ENCODE measurements at regions of chr4 and their contacts with region 1.

Region 1: GRCh38 chr4:63563288-63564014 is 845.8 kb downstream of the TECRL start:
- DNase-seq: no peak
- ATAC-seq: peak; percentile 90
- H3K4me3 ChIP-seq: no peak overlapping the region
- H3K27ac ChIP-seq: no peak overlapping the region
- H3K4me1 ChIP-seq: no peaks in the 10 kb centered on the region
- H3K27me3 ChIP-seq: no peaks in the 10 kb centered on the region
- CTCF ChIP-seq: peak; percentile 16 to 54 (median 38); a peak in 3 of 6 replicates
- EP300 ChIP-seq: no peak
- POLR2A ChIP-seq: no peak
- RAD21 ChIP-seq: peak; percentile 84

Region 2: DNA sequence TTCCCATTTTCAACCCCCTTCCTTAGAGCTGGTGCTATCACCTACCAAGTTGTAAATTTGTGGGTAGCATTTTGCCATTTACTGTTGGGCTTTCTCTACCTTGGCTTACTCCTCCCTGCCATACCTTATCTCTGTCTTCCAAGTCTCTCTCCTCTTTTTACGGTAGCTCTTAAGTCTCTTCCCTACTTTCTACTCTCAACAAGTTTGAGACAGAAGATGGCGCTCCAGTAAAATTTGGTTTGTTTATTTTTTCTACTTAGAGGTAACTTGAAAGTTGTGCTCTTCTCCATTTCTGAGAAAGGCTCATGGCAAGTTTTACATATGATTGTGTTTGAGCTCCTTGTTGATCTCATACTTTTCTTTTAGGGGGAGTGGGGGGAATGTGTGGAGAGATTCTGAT is 662.4 kb before region 1 on chr4:
- CTCF ChIA-PET with region 1: interaction called, 17 read pairs
- POLR2A ChIA-PET with region 1: no interaction called
- RAD21 ChIA-PET with region 1: interaction called, 11 read pairs
- SMC1A ChIA-PET with region 1: interaction called, 5 read pairs
- in situ Hi-C with region 1: no loop called
- intact Hi-C with region 1: no loop called
- DNase-seq: no peak
- ATAC-seq: no peak
- H3K4me3 ChIP-seq: no peak overlapping the region
- H3K27ac ChIP-seq: no peak overlapping the region
- H3K4me1 ChIP-seq: no peaks in the 10 kb centered on the region
- H3K27me3 ChIP-seq: no peaks in the 10 kb centered on the region
- CTCF ChIP-seq: no peak
- EP300 ChIP-seq: no peak
- POLR2A ChIP-seq: no peak
- RAD21 ChIP-seq: no peak

Region 3: DNA sequence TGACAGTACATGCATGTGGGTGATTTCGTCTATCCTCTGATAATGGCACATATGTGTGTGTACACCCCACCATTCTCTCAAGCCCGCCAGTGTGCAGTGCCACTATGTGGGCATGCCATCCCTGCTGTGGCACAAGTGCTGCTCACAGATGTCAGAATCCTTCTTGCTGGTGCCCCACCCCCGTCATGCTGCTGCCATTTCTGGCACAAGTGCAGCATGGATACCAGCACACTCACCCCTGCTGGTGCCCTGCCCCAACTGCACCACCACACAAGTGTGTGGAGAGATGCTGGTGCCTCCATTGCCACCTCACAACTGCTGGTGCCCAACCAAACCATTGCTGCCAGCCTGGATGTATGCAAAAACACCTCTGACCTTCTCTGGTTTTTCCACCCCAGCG is 288.0 kb before region 1 on chr4:
- CTCF ChIA-PET with region 1: no interaction called
- POLR2A ChIA-PET with region 1: no interaction called
- RAD21 ChIA-PET with region 1: no interaction called
- SMC1A ChIA-PET with region 1: no interaction called
- in situ Hi-C with region 1: no loop called
- intact Hi-C with region 1: no loop called
- DNase-seq: no peak
- ATAC-seq: peak; percentile 19; the same call in 1 of the 3 replicates
- H3K4me3 ChIP-seq: no peak overlapping the region
- H3K27ac ChIP-seq: no peak overlapping the region
- H3K4me1 ChIP-seq: no peaks in the 10 kb centered on the region
- H3K27me3 ChIP-seq: no peaks in the 10 kb centered on the region
- CTCF ChIP-seq: no peak
- EP300 ChIP-seq: no peak
- POLR2A ChIP-seq: no peak
- RAD21 ChIP-seq: no peak

Region 4: DNA sequence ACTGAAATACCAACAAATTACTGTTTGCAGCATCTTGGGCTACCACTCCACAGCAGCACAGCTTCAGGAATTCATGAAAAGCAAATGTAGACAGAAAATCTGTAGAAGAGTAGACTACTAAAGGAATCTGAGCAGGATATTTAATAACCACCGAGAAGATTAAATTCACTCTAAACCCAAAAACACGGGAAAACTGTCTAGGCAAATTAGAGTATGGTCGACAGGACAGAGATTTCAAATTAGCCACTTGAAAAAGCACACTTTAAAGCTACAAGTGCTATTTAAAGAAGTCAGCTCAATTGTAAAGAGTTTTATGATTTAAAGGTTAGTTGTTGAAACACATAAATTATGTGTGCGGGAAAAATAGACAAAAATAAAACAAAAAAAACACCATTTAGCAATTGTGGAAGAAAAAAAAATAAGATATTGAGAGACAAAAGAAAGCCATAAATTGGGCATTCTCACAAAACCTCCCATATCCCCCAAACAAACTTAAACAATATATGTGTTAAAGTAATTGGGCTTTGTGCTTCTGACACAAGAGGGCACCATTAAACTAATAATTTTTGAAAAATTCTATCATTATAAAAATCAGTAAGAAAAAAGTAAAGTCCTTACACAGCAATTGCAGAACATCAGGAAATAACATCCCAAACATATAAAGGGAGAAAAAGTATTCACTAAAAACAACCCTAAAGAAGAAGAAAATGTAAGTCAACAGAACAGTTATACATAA is 35.0 kb before region 1 on chr4:
- CTCF ChIA-PET with region 1: interaction called, 16 read pairs
- POLR2A ChIA-PET with region 1: no interaction called
- RAD21 ChIA-PET with region 1: interaction called, 26 read pairs
- SMC1A ChIA-PET with region 1: interaction called, 27 read pairs
- in situ Hi-C with region 1: no loop called
- intact Hi-C with region 1: no loop called
- DNase-seq: no peak
- ATAC-seq: 0 out of 3 replicates have a peak, but pooled peaks have one; percentile 31
- H3K4me3 ChIP-seq: no peak overlapping the region
- H3K27ac ChIP-seq: no peak overlapping the region
- H3K4me1 ChIP-seq: no peaks in the 10 kb centered on the region
- H3K27me3 ChIP-seq: no peaks in the 10 kb centered on the region
- CTCF ChIP-seq: no peak; a peak in 1 of 6 replicates
- EP300 ChIP-seq: no peak
- POLR2A ChIP-seq: no peak
- RAD21 ChIP-seq: peak; percentile 39; the same call in 1 of the 2 replicates

Region 5: DNA sequence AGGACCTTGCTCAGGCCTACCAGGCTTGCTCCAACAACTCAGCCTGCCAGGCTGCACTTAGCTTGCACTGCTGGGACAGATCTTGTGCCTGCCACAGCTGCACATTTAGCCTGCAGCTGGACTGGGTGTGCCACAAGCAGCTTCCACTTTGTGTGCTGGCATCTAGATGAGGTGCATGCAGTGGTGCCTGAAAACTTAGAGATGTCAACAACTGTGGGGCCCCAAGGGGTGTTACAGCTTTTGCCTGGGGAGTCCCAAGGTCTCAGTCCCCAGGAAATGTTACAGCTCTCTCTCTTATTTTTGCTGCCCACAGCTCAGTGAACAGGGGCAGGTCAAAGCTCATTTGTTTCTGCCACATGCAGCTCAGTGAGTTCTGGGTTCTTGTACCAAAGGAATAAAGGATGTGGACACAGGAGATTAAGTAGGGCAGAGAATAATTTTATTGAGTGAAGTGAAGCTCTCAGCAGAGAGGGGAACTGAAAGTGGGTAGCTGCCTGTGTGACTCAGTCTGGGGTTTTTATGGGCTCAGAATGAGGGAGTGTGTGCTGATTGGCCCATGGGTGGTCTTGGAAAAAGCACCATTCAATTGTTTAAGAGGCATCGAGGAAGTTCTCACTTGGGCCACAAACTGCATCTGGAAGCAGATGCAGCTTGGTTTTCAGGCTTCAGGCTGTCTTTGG is 17.5 kb after region 1 on chr4:
- CTCF ChIA-PET with region 1: interaction called, 5 read pairs
- POLR2A ChIA-PET with region 1: no interaction called
- RAD21 ChIA-PET with region 1: interaction called, 17 read pairs
- SMC1A ChIA-PET with region 1: interaction called, 18 read pairs
- in situ Hi-C with region 1: no loop called
- intact Hi-C with region 1: no loop called
- DNase-seq: peak; percentile 36
- ATAC-seq: peak; percentile 96
- H3K4me3 ChIP-seq: no peak overlapping the region
- H3K27ac ChIP-seq: no peak overlapping the region; the same call in 1 of the 2 replicates
- H3K4me1 ChIP-seq: peaks cover 4% of the 10 kb centered on the region
- H3K27me3 ChIP-seq: no peaks in the 10 kb centered on the region
- CTCF ChIP-seq: no peak
- EP300 ChIP-seq: peak in 1 of 2 experiments; percentile 52; a peak in 1 of 4 replicates
- POLR2A ChIP-seq: no peak
- RAD21 ChIP-seq: no peak